Breast epithelium (tissue), 4 donors: ENCODE measurements at regions of chr4 and their contacts with region 1.

Region 1: DNA sequence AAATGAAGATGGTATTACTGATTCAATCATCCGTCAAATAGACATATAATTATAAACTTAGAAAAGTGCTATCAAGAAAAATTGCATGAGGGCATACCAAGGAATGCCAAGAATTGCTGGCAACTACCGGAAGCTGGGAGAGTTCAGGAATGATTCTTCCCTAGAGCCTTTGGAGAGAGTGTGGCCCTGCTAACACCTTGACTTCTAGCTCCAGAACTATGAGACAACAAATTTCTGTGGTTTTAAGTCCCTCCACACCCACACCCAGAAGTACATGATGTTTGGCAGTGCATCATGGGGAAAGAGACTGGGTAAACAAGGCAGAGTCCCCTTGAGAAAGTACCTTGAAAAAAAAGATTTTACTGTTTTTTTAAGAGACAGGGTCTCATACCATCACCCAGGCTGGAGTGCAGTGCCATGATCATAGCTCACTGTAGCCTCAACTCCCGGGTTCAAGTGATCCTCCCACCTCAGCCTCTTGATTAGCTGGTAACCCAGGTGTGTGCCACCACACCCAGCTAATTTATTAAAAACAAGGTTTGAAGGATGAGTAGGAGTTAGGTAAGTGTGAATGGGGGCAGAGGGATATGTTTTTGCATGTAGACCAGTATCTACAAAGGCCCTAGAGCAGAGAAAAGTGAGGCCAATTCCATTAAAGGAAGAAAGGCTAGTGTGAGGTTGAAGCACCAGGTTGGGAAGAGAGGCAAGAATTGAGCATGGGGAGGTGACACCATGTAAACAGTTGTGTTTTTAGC is 53.1 kb downstream of the GSX2 start:
- DNase-seq: peak in 1 of 2 donors; percentile 41
- H3K4me3 ChIP-seq: no peak overlapping the region
- H3K27ac ChIP-seq: peak overlapping the region; percentile 19 to 37
- H3K4me1 ChIP-seq: no peaks in the 10 kb centered on the region
- H3K27me3 ChIP-seq: no peaks in the 10 kb centered on the region
- CTCF ChIP-seq: no peak
- POLR2A ChIP-seq: no peak

Region 2: GRCh38 chr4:53313510-53313909 is 839.5 kb before region 1 on chr4:
- intact Hi-C with region 1: loop called (anchors 10 kb)
- DNase-seq: no peak
- H3K4me3 ChIP-seq: no peak overlapping the region
- H3K27ac ChIP-seq: no peak overlapping the region
- H3K4me1 ChIP-seq: no peaks in the 10 kb centered on the region
- H3K27me3 ChIP-seq: no peaks in the 10 kb centered on the region
- CTCF ChIP-seq: no peak
- POLR2A ChIP-seq: no peak

Region 3: DNA sequence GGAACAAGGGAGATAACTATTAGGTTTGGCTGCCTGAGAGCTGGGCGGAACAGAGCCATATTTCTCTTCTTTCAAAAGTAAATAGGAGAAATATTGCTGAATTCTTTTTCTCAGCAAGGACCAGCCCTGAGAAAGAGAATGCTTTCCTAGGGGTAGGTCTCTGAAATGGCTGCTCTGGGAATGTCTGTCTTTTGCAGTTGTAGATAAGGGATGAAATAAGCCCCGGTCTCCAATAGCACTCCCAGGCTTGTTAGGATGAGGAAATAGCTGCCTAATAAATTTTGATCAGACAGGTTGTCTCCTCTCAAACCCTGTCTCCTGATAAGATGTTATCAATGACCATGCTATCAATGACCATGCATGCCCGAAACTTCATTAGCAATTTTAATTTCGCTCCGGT is 297.0 kb after region 1 on chr4:
- intact Hi-C with region 1: loop called (anchors 5 kb)
- DNase-seq: no peak
- H3K4me3 ChIP-seq: no peak overlapping the region
- H3K27ac ChIP-seq: no peak overlapping the region
- H3K4me1 ChIP-seq: no peaks in the 10 kb centered on the region
- H3K27me3 ChIP-seq: no peaks in the 10 kb centered on the region
- CTCF ChIP-seq: no peak
- POLR2A ChIP-seq: no peak